ENCODE measurements at regions of chr20 and their contacts with region 1.

Region 1: DNA sequence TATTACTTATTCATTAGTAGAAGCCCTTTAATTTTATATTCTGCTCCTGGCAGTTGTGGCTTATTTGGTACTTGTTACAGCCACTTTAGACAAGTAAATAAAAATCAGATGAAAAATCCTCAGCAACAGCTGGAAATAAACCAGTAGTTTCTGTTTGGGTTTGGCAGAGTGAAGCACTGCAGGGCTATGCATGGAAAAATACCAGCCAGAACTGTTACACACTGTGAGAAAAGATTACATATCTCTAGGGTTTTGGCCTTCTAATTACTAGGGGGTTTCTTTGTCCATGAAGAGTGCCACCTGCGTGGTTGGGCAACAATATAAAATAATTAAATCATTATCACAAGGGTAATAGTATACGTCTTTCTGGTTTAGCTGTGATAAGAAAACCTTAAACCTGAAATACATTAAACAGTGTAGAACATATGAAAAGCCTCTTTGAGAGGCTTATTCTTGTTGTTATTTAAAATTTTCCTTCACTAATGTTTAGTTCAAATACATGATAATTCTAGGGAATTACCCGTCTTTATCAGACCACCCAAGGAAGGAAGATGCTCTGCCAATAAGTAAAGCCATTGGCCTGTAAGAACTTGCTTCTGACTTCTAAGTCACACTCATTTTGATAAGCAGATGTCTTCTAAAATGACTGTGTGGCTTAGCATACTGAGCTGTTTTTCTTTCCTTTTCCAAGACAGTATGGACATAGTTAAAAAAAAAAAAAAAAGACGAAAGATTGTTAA is 320.0 kb upstream of the FLRT3 start:
- DNase-seq: no peak
- H3K4me3 ChIP-seq: no peak overlapping the region
- CTCF ChIP-seq: no peak

Region 2: GRCh38 chr20:14337400-14338171 is 319.9 kb before region 1 on chr20 and contains the start of gene FLRT3:
- in situ Hi-C with region 1: no loop called
- DNase-seq: peak; percentile 97
- H3K4me3 ChIP-seq: peak within 1 kb of the TSS; percentile 45
- CTCF ChIP-seq: peak; percentile 90

Region 3: DNA sequence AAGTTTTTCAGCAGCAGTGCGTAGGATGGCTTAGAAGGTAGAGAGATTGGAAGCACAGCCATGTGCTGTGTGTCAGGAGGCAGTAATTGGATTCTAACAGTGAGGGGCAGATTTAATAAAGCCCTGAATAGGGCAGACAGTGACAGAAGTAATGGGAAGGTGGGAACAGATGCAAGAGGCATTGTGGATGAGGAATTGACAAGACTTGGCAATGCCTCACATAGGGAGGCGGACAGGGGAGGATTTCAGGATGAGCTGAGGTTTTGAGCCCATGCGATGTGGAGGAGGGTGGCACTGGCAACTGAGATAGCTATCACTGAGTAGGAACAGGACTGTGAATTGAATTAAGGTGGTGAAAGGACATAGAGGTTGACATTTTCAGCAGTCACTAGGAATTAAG is 57.8 kb before region 1 on chr20:
- in situ Hi-C with region 1: loop called (anchors 5 kb)
- DNase-seq: no peak
- H3K4me3 ChIP-seq: no peak overlapping the region
- CTCF ChIP-seq: no peak

Measured in astrocyte of the cerebellum (primary cell).